Activated CD4-positive, alpha-beta memory T cell treated with anti-CD3 and anti-CD28 coated beads for 36 hours (primary cell): ENCODE measurements at regions of chr21 and their contacts with region 1.

Region 1: DNA sequence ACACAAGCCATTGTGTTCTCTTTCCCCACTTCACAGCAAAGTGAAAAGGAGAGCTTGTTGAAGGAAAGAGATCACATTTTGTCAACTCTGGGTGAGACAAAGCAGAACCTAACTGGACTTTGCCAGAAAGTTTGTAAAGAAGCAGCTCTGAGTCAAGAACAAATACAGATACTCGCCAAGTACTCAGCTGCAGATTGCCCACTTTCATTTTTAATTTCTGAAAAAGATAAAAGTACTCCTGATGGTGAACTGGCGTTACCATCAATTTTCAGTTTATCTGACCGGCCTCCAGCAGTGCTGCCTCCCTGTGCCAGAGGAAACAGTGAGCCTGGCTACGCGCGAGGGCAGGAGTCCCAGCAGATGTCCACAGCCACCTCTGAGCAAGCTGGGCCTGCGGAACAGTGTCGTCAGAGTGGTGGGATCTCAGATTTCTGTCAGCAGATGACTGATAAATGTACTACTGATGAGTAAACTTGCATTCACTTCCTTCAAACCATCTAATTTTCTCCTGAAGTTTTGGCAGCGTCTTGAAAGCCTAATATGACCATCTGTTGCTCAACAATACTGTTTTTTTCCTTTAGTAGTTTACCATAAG is 43.7 kb downstream of the BACH1 start:
- DNase-seq: peak; percentile 84
- H3K4me3 Mint-ChIP-seq: peak overlapping the region; percentile 53
- H3K27ac Mint-ChIP-seq: peak overlapping the region; percentile 84
- H3K4me1 Mint-ChIP-seq: peaks cover 34% of the 10 kb centered on the region
- H3K27me3 Mint-ChIP-seq: no peaks in the 10 kb centered on the region

Region 2: GRCh38 chr21:28928578-28929420 is 413.7 kb before region 1 on chr21:
- CTCF ChIA-PET with region 1: no interaction called
- POLR2A ChIA-PET with region 1: no interaction called
- intact Hi-C with region 1: no loop called
- DNase-seq: no peak
- H3K4me3 Mint-ChIP-seq: no peak overlapping the region
- H3K27ac Mint-ChIP-seq: no peak overlapping the region
- H3K4me1 Mint-ChIP-seq: no peaks in the 10 kb centered on the region
- H3K27me3 Mint-ChIP-seq: no peaks in the 10 kb centered on the region

Region 3: DNA sequence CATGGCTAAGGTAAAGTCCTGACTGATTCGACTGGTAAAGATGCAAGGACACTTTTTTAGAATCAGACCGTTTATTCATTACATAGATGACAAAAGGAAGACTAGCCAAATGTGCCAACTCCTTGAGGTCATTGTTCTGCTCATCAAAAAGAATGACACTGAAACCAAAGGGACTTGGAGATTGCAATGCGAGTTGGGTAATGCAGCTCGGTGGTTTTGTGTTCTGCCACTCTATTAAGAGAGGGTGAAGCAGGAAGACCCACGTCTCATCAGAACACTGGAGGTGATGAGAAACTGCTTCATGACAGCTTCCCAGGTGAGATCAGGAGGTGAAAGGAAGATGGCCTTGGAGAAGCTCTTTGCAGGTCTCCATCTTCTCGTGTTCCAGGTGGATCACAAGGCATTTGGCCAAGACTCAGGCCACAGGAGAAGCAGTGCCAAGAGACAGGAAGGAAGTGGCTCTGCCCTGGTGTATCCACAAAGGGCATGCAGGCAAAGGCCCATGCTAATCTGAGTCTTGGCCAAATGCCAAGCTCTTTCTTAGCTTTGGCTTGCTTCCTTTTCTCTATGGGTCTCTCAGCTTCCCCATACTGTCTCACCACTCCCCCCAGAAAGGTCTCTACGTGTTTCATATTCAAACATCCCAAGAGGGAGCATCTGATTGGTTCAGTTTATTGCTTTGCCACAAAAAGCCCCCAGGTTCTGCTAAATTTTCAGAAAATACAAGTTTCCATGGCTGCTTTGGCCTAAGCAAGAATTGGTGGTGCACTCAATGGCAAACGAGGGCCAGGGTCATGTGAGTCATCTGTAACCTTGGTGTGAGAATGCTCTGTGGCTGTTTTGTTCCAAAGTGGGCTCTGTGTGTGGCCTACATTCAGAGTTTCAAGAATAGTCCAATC is 263.3 kb before region 1 on chr21:
- CTCF ChIA-PET with region 1: no interaction called
- POLR2A ChIA-PET with region 1: no interaction called
- intact Hi-C with region 1: loop called (anchors 5 kb)
- DNase-seq: peak; percentile 66
- H3K4me3 Mint-ChIP-seq: peak overlapping the region; percentile 84
- H3K27ac Mint-ChIP-seq: peak overlapping the region; percentile 81
- H3K4me1 Mint-ChIP-seq: peaks cover 58% of the 10 kb centered on the region
- H3K27me3 Mint-ChIP-seq: no peaks in the 10 kb centered on the region

Region 4: DNA sequence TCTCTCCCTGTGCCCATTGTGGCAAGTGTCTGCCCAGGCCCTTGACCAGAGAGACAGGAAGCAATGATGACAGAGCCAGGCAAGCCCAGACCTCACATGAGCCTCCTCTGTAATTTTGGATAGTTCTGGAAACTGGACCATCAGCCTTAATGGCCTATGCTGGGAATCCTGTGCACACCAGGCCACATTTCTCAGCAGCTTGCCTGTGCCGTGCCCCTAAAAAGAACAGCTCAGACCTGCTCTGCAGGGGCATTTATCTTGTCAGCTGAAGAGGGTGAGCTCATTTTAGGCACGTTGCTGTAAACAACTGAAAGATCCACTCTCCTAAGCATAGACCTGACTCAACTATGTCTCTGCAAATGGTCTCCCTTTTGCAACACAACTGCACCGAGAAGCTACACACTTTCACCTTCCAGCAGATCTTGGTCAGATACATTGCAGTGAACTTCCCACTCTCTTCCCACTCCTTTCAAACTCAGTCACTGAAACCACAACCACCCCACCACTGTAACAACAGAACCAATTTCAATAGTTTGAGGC is 97.3 kb before region 1 on chr21:
- CTCF ChIA-PET with region 1: interaction called, 6 read pairs
- POLR2A ChIA-PET with region 1: interaction called, 3 read pairs
- intact Hi-C with region 1: loop called (anchors 5 kb)
- DNase-seq: peak; percentile 65
- H3K4me3 Mint-ChIP-seq: no peak overlapping the region
- H3K27ac Mint-ChIP-seq: no peak overlapping the region
- H3K4me1 Mint-ChIP-seq: peaks cover 12% of the 10 kb centered on the region
- H3K27me3 Mint-ChIP-seq: peaks cover 12% of the 10 kb centered on the region